CD14-positive monocyte (primary cell): ENCODE measurements at regions of chr22 and their contacts with region 1.

Region 1: DNA sequence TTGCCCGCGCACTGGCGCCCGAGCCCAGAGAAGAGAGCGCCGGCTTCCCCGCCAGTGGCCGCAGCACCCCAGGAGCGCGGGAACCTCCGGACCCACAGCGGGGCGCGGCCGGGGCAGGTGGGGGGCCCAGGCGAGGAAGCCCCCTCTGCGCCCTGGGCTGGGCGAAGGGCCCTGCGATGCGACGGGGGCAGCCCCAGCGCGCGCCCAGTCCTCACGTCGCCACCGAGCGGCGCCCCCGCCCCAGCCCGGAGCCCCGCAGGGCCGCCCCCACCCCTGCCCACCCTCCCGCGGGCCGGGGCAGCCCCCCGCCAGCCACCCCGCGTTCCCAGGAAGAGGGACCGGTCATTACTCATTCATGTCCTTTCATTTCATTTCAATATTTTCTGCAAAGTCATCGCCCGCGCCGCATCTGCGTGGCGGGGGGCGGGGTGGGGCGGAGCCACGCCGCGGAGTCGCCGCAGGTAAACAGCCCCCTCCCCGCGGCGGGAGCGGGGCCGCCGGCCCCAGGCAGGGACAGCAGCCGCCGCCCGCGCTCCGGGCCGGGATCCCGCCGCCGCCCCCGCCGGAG is 673 bp upstream of the PANX2 start:
- DNase-seq: peak; percentile 52 to 70 (median 56)
- H3K4me3 ChIP-seq: peak overlapping the region; percentile 7 to 48 (median 12)
- H3K4me3 Mint-ChIP-seq: peak overlapping the region; percentile 71 to 72
- H3K27ac ChIP-seq: no peak overlapping the region
- H3K27ac Mint-ChIP-seq: no peak overlapping the region
- H3K4me1 ChIP-seq: peaks cover 13 to 33% of the 10 kb centered on the region in 2 donors
- H3K4me1 Mint-ChIP-seq: peaks cover 28% of the 10 kb centered on the region
- H3K27me3 ChIP-seq: peaks cover 8 to 33% of the 10 kb centered on the region in 2 donors
- H3K27me3 Mint-ChIP-seq: peaks cover 35 to 67% (median 37%) of the 10 kb centered on the region in 3 donors
- CTCF ChIP-seq: no peak

Region 2: GRCh38 chr22:50185384-50186087 is 15.7 kb after region 1 on chr22 and contains the start of gene TRABD:
- intact Hi-C with region 1: loop called in 1 of 2 experiments (anchors 2 kb)
- DNase-seq: peak; percentile 82 to 87 (median 87)
- H3K4me3 ChIP-seq: peak within 1 kb of the TSS; percentile 56 to 86 (median 58)
- H3K4me3 Mint-ChIP-seq: peak within 1 kb of the TSS; percentile 95
- H3K27ac ChIP-seq: peak within 1 kb of the TSS; percentile 31 to 85
- H3K27ac Mint-ChIP-seq: peak within 1 kb of the TSS; percentile 82 to 96 (median 89)
- H3K4me1 ChIP-seq: peaks cover 56 to 66% of the 10 kb centered on the region in 2 donors
- H3K4me1 Mint-ChIP-seq: peaks cover 46% of the 10 kb centered on the region
- H3K27me3 ChIP-seq: no peaks in the 10 kb centered on the region
- H3K27me3 Mint-ChIP-seq: peaks cover 1 to 5% (median 2%) of the 10 kb centered on the region in 3 donors
- CTCF ChIP-seq: no peak
- polyA plus RNA-seq, gene TRABD: 34.5 to 240 (median 39.3) TPM

Region 3: DNA sequence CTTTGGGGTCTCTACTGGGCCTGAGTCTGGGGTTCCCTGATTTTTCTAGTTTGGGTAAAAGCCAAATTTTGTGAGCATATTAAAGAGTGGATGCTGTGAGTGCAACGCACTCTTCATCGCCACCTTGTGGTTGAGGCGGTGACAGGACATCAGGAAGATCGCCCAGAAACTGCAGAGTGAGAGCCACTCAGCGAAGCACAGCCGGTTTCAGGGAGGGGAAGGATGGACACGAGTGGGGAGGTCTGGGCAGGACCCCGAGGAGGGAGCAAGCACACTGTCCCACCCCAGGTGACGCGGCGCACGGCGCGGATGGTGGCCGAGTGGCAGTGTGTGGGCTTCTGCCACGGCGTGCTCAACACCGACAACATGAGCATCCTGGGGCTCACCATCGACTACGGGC is 40.0 kb after region 1 on chr22:
- intact Hi-C with region 1: loop called in 1 of 2 experiments (anchors 5 kb)
- DNase-seq: peak; percentile 63 to 76 (median 67)
- H3K4me3 ChIP-seq: no peak overlapping the region
- H3K4me3 Mint-ChIP-seq: no peak overlapping the region
- H3K27ac ChIP-seq: no peak overlapping the region
- H3K27ac Mint-ChIP-seq: peak overlapping the region in 2 of 7 donors; percentile 37 to 79
- H3K4me1 ChIP-seq: peaks cover 27 to 34% of the 10 kb centered on the region in 2 donors
- H3K4me1 Mint-ChIP-seq: peaks cover 28% of the 10 kb centered on the region
- H3K27me3 ChIP-seq: no peaks in the 10 kb centered on the region
- H3K27me3 Mint-ChIP-seq: no peaks in the 10 kb centered on the region
- CTCF ChIP-seq: peak; percentile 82